Lower leg skin (tissue), 4 donors: ENCODE measurements at regions of chr6 and their contacts with region 1.

Region 1: GRCh38 chr6:73732845-73733675 is 37.1 kb downstream of the CD109 start:
- DNase-seq: peak; percentile 70 to 91
- H3K4me3 ChIP-seq: no peak overlapping the region
- CTCF ChIP-seq: peak in 1 of 3 donors; percentile 44
- POLR2A ChIP-seq: no peak

Region 2: DNA sequence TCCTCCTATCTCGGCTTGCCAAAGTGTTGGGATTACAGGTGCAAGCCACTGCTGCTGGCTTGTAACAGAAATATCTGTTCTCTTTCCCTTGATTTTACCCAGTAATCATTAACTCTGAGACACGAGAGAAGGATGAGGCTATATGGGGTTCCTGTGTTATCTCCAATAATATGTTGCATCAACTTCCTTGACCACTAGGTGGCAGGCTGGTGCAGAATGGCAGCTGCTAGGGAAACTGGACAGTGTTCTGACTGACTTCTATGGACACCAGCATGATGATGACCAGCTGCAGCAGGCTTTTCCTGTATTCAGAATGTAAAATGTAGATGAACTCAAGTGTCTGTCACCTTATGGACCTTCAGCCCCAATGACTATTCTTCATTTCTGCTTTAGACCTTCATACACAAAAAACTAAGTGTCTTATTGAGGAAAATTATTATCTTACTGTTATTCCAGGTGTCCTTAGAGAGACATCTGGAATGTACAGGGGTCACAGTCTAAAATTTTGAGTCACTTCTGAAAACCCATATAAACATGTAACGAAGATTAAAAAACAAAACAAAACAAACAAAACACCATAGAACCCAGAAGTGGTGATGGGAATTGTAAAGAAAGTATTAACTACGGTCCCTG is 57.5 kb before region 1 on chr6:
- intact Hi-C with region 1: loop called (anchors 5 kb)
- DNase-seq: peak; percentile 85 to 93
- H3K4me3 ChIP-seq: no peak overlapping the region
- CTCF ChIP-seq: peak in 2 of 3 donors; percentile 17 to 73
- POLR2A ChIP-seq: no peak